Activated CD8-positive, alpha-beta T cell treated with anti-CD3 and anti-CD28 coated beads for 36 hours (primary cell): ENCODE measurements at regions of chr20 and their contacts with region 1.

Region 1: DNA sequence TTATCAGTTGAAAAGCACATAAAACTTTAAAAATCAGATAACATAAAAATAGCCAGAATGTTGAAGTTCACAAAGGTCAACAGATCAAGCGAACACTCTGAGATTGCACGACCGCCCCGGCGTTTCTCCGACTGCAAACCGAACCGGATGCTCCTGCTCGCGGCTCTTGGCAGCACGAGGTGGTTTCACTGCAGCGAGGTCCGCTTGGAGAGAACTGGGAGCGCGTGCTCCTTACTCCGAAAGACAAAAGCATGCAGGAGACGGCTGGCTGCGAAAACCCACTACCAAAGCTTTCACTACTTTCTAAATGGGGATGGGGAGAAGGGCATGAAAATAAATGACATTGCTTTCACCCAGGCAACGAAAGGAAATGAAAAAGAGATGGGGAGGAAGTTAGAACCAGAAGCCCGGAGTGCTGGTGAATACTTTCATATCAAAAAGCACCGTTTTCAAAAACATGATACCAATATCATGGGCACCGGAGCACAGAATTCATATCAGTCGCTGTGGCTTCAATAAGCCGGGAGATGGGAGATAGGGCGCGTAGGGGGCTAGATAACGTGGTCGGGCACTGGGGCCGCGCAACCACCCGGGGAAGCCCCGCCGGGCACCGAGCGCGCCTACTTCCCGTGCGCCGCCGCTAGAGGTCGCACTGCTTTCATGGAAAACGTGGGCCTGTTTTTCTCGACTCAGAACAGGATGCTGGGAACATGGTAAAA is 8.3 kb upstream of the ANKRD60 start:
- DNase-seq: peak; percentile 91
- ATAC-seq: peak; percentile 87
- H3K4me3 Mint-ChIP-seq: peak overlapping the region; percentile 81
- H3K27ac Mint-ChIP-seq: peak overlapping the region; percentile 95
- H3K4me1 Mint-ChIP-seq: peaks cover 32% of the 10 kb centered on the region
- H3K27me3 Mint-ChIP-seq: no peaks in the 10 kb centered on the region
- CTCF ChIP-seq: peak; percentile 98

Region 2: GRCh38 chr20:58094160-58094559 is 142.6 kb before region 1 on chr20:
- CTCF ChIA-PET with region 1: no interaction called
- POLR2A ChIA-PET with region 1: no interaction called
- intact Hi-C with region 1: no loop called
- DNase-seq: no peak
- ATAC-seq: no peak
- H3K4me3 Mint-ChIP-seq: no peak overlapping the region
- H3K27ac Mint-ChIP-seq: no peak overlapping the region
- H3K4me1 Mint-ChIP-seq: no peaks in the 10 kb centered on the region
- H3K27me3 Mint-ChIP-seq: peaks cover 12% of the 10 kb centered on the region
- CTCF ChIP-seq: no peak

Region 3: GRCh38 chr20:58224974-58225373 is 11.8 kb before region 1 on chr20:
- CTCF ChIA-PET with region 1: interaction called, 25 read pairs
- POLR2A ChIA-PET with region 1: interaction called, 4 read pairs
- intact Hi-C with region 1: no loop called
- DNase-seq: no peak
- ATAC-seq: no peak
- H3K4me3 Mint-ChIP-seq: no peak overlapping the region
- H3K27ac Mint-ChIP-seq: no peak overlapping the region
- H3K4me1 Mint-ChIP-seq: peaks cover 11% of the 10 kb centered on the region
- H3K27me3 Mint-ChIP-seq: peaks cover 56% of the 10 kb centered on the region
- CTCF ChIP-seq: no peak

Region 4: GRCh38 chr20:58271606-58272402 is 35.0 kb after region 1 on chr20:
- CTCF ChIA-PET with region 1: interaction called, 11 read pairs
- POLR2A ChIA-PET with region 1: no interaction called
- intact Hi-C with region 1: no loop called
- DNase-seq: peak; percentile 81
- ATAC-seq: peak; percentile 81
- H3K4me3 Mint-ChIP-seq: no peak overlapping the region
- H3K27ac Mint-ChIP-seq: peak overlapping the region; percentile 21
- H3K4me1 Mint-ChIP-seq: peaks cover 38% of the 10 kb centered on the region
- H3K27me3 Mint-ChIP-seq: no peaks in the 10 kb centered on the region
- CTCF ChIP-seq: no peak

Region 5: GRCh38 chr20:58349586-58349985 is 112.8 kb after region 1 on chr20:
- CTCF ChIA-PET with region 1: no interaction called
- POLR2A ChIA-PET with region 1: no interaction called
- intact Hi-C with region 1: no loop called
- DNase-seq: no peak
- ATAC-seq: no peak
- H3K4me3 Mint-ChIP-seq: no peak overlapping the region
- H3K27ac Mint-ChIP-seq: no peak overlapping the region
- H3K4me1 Mint-ChIP-seq: peaks cover 4% of the 10 kb centered on the region
- H3K27me3 Mint-ChIP-seq: no peaks in the 10 kb centered on the region
- CTCF ChIP-seq: no peak

Region 6: DNA sequence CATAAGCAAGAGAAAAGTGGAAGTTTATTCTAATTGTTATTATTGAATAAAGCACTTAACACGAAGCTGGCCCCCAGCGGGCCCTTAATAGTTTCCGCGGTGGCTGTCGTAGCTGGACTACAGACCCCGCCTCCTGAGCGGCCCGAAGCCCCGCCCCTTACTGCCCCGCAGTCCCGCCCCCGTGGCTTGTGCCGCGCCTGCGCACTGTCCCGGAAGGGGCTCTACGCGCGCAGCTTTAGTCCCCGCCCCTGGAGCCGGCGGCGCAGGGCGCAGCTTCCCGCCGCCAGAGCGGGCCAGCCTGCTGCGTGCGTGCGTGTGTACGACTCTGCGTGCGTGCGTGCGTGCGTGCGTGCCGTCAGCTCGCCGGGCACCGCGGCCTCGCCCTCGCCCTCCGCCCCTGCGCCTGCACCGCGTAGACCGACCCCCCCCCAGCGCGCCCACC is 152.1 kb after region 1 on chr20 and contains the start of gene VAPB:
- CTCF ChIA-PET with region 1: interaction called, 7 read pairs
- POLR2A ChIA-PET with region 1: interaction called, 3 read pairs
- intact Hi-C with region 1: loop called (anchors 10 kb)
- DNase-seq: peak; percentile 95
- ATAC-seq: peak; percentile 98
- H3K4me3 Mint-ChIP-seq: peak within 1 kb of the TSS; percentile 94
- H3K27ac Mint-ChIP-seq: peak within 1 kb of the TSS; percentile 97
- H3K4me1 Mint-ChIP-seq: peaks cover 32% of the 10 kb centered on the region
- H3K27me3 Mint-ChIP-seq: peaks cover 2% of the 10 kb centered on the region
- CTCF ChIP-seq: no peak
- total RNA-seq, gene VAPB: 46.3 to 46.8 TPM

Region 7: DNA sequence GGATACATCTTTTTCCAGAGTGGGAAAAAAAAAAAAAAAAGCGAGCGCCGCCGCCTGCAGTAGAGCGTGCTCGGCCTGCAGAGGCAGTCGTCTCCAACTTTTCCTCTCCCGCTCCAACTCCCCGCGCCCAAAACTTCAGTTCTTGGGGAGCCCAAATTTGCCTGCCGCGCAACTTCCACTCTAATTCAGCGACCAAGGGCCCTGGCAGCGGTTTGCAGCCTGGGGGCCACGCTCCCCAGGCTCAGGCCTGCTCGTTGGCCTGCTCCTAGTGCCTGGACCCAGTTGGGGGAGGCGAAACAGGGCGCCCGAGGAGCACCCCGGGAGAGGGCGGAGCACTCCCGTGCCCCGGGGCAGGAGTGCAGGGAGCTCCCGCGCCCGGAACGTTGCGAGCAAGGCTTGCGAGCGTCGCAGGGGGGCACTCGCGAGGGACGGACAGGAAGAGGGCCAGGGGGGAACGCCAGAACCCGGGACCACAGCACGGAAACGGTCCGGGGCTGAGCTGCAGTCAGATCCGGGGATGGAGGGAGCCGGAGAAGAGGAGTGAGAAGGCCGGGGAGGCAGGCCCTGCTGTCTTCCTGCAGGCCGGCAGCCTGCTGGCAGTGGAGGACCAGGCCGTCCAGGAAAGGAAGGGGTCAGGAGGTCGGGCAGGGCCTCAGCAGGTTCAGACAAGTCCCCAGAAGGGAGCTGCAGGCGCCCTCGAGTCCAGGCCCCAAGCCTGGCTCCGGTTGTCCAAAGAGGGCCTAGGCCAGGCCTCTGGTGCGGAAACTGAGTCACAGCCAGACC is 414.2 kb after region 1 on chr20 and contains the start of gene STX16:
- CTCF ChIA-PET with region 1: interaction called, 3 read pairs
- POLR2A ChIA-PET with region 1: interaction called, 3 read pairs
- intact Hi-C with region 1: loop called (anchors 5 kb)
- DNase-seq: peak; percentile 90
- ATAC-seq: peak; percentile 86
- H3K4me3 Mint-ChIP-seq: peak within 1 kb of the TSS; percentile 93
- H3K27ac Mint-ChIP-seq: peak within 1 kb of the TSS; percentile 95
- H3K4me1 Mint-ChIP-seq: peaks cover 14% of the 10 kb centered on the region
- H3K27me3 Mint-ChIP-seq: no peaks in the 10 kb centered on the region
- CTCF ChIP-seq: peak; percentile 89
- total RNA-seq, gene STX16: 108 to 109 TPM